ENCODE measurements at regions of chr1 and their contacts with region 1.

Region 1: DNA sequence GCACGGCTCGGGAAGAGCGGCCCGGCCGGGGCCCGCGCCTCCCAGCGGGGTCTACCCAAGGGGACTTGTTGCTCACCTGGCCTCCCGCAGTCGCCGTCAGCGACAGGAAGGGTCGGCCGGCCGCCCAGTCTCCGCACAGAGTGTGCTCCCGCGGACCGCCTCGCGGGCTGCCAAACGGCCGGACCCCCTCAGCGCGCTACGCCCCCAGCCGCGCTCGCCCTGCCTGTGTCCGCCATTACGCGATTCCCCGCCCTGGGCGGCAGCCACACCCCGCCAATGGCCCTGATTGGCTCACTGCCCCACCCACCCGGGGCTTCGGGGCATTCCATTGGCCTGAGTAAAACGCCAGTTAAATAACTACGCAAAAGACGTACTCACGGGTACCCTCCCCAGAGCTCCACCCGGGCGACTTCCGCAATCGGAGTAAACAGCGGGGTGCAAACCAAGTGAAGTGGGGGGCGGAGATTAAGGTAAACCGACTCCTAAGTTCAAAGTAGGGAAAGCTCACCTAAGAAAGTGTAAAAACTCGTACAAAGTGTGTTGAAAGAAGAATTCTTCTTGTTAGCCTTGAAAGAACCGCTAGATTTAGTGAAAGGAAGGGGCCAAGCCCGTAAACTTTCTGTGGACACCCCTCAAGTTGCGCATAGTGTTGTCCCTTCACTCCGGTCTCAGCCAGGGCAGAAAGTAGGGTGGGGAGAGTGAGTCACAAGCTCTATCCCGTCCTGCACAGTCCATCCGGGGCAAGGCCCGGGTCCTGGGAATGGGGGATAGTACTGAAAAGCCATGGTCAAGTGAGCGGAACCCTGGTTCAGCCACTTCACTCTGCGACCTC is at the start of gene WASF2:
- DNase-seq: peak; percentile 94
- ATAC-seq: peak; percentile 88
- H3K4me3 Mint-ChIP-seq: peak within 1 kb of the TSS; percentile 95
- H3K27ac Mint-ChIP-seq: peak within 1 kb of the TSS; percentile 100
- H3K4me1 Mint-ChIP-seq: peaks cover 59% of the 10 kb centered on the region
- H3K27me3 Mint-ChIP-seq: no peaks in the 10 kb centered on the region
- CTCF ChIP-seq: no peak
- total RNA-seq, gene WASF2: 136 and 137 TPM in 2 replicates

Region 2: DNA sequence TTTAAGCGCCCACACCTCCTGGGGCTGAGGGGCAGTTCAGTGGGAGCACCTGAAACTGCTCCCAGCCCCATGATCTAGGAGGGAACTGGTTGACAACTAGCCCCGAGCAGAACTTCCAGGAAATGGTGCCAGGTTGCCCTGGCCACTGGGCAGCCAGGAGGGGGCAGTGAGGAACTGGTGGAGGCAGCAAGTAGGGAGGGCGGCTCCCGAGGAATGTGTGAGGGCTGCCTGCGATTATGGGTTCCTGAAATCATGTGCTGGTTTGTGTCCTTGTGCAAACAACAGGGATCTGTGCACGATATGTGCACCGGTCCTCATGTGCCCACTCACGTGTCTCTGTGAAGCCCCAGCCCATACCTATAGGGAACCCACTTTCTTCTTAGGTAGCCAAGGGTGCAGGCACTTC is 87.8 kb before region 1 on chr1:
- CTCF ChIA-PET with region 1: interaction called, 3 read pairs
- POLR2A ChIA-PET with region 1: interaction called, 9 read pairs
- intact Hi-C with region 1: loop called (anchors 1 kb)
- DNase-seq: no peak
- ATAC-seq: no peak
- H3K4me3 Mint-ChIP-seq: peak overlapping the region; percentile 72
- H3K27ac Mint-ChIP-seq: peak overlapping the region; percentile 91
- H3K4me1 Mint-ChIP-seq: peaks cover 53% of the 10 kb centered on the region
- H3K27me3 Mint-ChIP-seq: no peaks in the 10 kb centered on the region
- CTCF ChIP-seq: no peak

Region 3: DNA sequence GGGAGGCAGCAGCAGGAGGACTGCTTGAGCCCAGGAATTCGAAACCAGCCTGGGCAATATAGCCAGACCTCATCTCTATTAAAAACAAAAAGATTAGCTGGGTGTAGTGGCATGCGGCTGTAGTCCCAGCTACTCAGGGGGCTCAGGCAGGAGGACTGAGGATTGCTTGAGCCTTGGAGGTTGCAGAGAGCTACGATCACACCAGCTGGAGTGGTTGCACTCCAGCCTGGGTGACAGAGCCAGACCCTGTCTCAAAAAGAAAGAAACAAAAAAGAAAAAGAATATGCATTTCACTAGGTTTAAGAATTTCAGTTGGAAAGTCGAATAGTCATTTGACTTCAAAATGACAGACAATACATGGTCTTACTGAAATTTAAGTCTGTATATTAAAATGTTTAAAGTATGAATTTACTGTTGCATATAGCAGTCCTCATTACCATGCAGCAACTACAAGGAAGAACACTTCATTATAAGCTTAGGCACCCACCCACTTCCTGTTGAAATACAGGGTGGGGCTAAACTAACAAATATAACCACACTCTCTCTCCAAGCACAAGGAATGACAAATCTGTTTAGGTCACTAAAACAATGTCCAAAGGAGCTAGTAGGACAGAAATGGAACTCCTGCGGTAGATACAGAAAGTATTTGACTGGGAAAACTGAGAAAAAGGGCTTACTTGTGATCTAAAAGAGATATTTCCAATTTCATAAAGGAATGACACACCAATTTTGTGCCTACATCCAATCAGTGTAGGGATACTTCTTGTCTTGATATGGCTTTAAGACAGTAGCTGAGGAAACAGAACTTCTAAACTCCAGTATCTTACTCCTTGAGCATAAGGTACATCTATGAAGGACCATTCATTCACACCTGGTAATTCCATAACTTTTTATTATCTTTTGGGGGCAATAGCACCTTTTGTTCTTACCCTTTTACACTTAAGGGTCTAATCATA is 53.6 kb before region 1 on chr1:
- CTCF ChIA-PET with region 1: no interaction called
- POLR2A ChIA-PET with region 1: interaction called, 21 read pairs
- intact Hi-C with region 1: loop called (anchors 1 kb)
- DNase-seq: no peak
- ATAC-seq: peak; percentile 49
- H3K4me3 Mint-ChIP-seq: peak overlapping the region; percentile 63
- H3K27ac Mint-ChIP-seq: peak overlapping the region; percentile 91
- H3K4me1 Mint-ChIP-seq: peaks cover 87% of the 10 kb centered on the region
- H3K27me3 Mint-ChIP-seq: no peaks in the 10 kb centered on the region
- CTCF ChIP-seq: no peak

Region 4: GRCh38 chr1:27455139-27455811 is 34.9 kb before region 1 on chr1:
- CTCF ChIA-PET with region 1: no interaction called
- POLR2A ChIA-PET with region 1: interaction called, 10 read pairs
- intact Hi-C with region 1: no loop called
- DNase-seq: no peak
- ATAC-seq: peak; percentile 18
- H3K4me3 Mint-ChIP-seq: no peak overlapping the region
- H3K27ac Mint-ChIP-seq: peak overlapping the region; percentile 57
- H3K4me1 Mint-ChIP-seq: peaks cover 50% of the 10 kb centered on the region
- H3K27me3 Mint-ChIP-seq: no peaks in the 10 kb centered on the region
- CTCF ChIP-seq: no peak

Region 5: DNA sequence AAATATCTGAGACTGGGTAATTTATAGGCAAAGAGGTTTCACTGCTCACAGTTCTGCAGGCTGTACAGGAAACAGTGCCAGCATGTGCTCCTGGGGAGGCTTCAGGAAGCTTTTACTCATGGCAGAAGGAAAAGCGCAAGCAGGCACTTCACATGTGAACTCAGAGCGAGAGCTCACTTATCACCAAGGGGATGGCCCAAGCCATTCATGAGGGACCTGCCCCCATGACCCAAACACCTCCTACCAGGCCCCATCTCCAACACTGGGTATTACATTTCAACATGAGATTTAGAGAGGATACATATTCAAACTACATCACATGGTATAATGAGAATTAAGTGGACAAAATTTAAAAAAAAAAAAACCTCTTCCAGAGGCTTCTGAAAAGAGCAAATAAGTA is 13.9 kb before region 1 on chr1:
- CTCF ChIA-PET with region 1: interaction called, 3 read pairs
- POLR2A ChIA-PET with region 1: interaction called, 23 read pairs
- intact Hi-C with region 1: loop called (anchors 1 kb)
- DNase-seq: no peak
- ATAC-seq: no peak
- H3K4me3 Mint-ChIP-seq: peak overlapping the region; percentile 55
- H3K27ac Mint-ChIP-seq: peak overlapping the region; percentile 18
- H3K4me1 Mint-ChIP-seq: peaks cover 93% of the 10 kb centered on the region
- H3K27me3 Mint-ChIP-seq: no peaks in the 10 kb centered on the region
- CTCF ChIP-seq: no peak

Region 6: DNA sequence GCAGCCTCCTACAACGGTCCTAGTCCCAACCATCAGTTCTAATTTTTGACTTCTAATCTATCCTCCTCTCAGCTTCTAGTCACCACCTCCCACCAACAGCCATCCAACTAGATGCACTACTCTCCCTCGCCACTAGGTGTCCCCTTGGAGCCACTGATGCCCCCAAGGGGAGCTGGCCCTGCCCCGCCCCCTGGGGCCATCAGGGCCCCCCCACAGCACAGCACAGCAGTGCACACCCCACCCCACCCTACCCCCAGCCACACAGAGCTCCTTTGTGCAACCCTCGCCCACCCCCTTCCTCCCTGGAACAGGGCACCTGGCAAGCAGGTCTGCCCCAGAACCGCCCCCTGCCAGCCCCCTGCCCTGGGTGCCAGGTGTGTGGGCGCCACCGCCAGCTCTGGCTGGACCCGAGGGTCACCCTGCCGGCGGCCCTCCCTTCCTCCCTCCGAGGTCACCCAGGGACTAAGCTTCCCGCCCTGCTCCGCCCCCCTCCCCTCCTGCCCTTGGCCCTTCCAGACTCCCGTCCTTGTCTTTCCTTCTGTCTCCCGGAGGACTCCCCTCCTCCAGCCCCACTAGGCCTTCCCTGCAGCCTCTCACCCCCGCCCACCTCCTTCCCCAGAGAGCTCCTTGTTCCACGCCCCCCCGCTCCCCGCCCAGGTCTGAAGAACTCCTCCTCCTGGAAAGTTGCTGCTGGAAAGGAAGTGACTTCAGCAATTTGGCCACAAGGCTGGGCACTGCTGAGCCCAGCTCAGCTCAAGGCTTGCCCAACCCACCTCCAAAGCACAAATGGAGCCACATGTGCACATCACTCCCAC is 66.9 kb after region 1 on chr1:
- CTCF ChIA-PET with region 1: interaction called, 4 read pairs
- POLR2A ChIA-PET with region 1: interaction called, 15 read pairs
- intact Hi-C with region 1: no loop called
- DNase-seq: peak; percentile 62
- ATAC-seq: peak; percentile 84
- H3K4me3 Mint-ChIP-seq: peak overlapping the region; percentile 36
- H3K27ac Mint-ChIP-seq: peak overlapping the region; percentile 26
- H3K4me1 Mint-ChIP-seq: peaks cover 38% of the 10 kb centered on the region
- H3K27me3 Mint-ChIP-seq: no peaks in the 10 kb centered on the region
- CTCF ChIP-seq: peak; percentile 26

Measured in activated B cell treated with CpG ODN at 0.5 μM for 24 hours (primary cell).